Adrenal gland (tissue), 19 donors: ENCODE measurements at regions of chr5 and their contacts with region 1.

Region 1: GRCh38 chr5:157816682-157817386 is 42.1 kb downstream of the CLINT1 start:
- DNase-seq: no peak
- H3K4me3 ChIP-seq: no peak overlapping the region
- H3K27ac ChIP-seq: no peak overlapping the region
- H3K4me1 ChIP-seq: peaks cover 10 to 31% of the 10 kb centered on the region in 2 donors
- H3K27me3 ChIP-seq: no peaks in the 10 kb centered on the region
- CTCF ChIP-seq: peak; percentile 27 to 80 (median 59)
- POLR2A ChIP-seq: no peak

Region 2: GRCh38 chr5:157948738-157949410 is 132.0 kb after region 1 on chr5:
- intact Hi-C with region 1: loop called in 1 of 2 experiments (anchors 10 kb)
- DNase-seq: peak; percentile 87 to 97 (median 91)
- H3K4me3 ChIP-seq: no peak overlapping the region
- H3K27ac ChIP-seq: no peak overlapping the region
- H3K4me1 ChIP-seq: no peaks in the 10 kb centered on the region
- H3K27me3 ChIP-seq: no peaks in the 10 kb centered on the region
- CTCF ChIP-seq: peak; percentile 73 to 89 (median 86)
- POLR2A ChIP-seq: no peak